ENCODE measurements at regions of chrX and their contacts with region 1.

Region 1: GRCh38 chrX:65706041-65706828 is 38.8 kb downstream of the MSN start:
- DNase-seq: no peak
- H3K4me3 ChIP-seq: no peak overlapping the region
- H3K27ac ChIP-seq: peak overlapping the region; percentile 73 to 82 (median 78)
- H3K4me1 ChIP-seq: peaks cover 0 to 47% (median 39%) of the 10 kb centered on the region in 4 donors
- H3K27me3 ChIP-seq: no peaks in the 10 kb centered on the region
- CTCF ChIP-seq: no peak
- EP300 ChIP-seq: no peak
- POLR2A ChIP-seq: no peak

Region 2: DNA sequence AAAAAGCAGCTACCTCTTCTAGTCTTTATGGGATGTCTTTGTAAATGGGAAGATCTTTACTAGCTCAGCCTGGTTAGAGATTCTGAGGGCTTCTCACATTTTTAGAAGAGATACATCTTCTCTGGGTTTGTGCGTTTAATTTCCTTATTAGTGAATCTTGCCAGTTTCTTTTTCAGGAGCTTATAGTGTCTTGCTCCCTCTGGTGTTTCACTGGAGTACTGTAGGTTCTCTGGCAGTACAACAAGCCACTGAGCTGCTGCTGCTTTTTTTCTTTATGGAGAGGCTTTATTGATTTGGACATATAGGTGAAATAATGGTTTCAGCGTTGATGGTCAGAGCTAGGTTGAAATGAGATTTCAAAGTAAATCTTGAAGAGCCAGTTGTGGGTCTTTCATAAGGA is 254.6 kb before region 1 on chrX:
- intact Hi-C with region 1: no loop called
- DNase-seq: no peak
- H3K4me3 ChIP-seq: no peak overlapping the region
- H3K27ac ChIP-seq: no peak overlapping the region
- H3K4me1 ChIP-seq: no peaks in the 10 kb centered on the region
- H3K27me3 ChIP-seq: no peaks in the 10 kb centered on the region
- CTCF ChIP-seq: no peak
- EP300 ChIP-seq: no peak
- POLR2A ChIP-seq: no peak

Region 3: GRCh38 chrX:65595460-65595876 is 110.8 kb before region 1 on chrX:
- intact Hi-C with region 1: loop called (anchors 2 kb)
- DNase-seq: peak; percentile 97
- H3K4me3 ChIP-seq: no peak overlapping the region
- H3K27ac ChIP-seq: peak overlapping the region; percentile 74 to 78 (median 76)
- H3K4me1 ChIP-seq: peaks cover 0 to 10% (median 4%) of the 10 kb centered on the region in 4 donors
- H3K27me3 ChIP-seq: no peaks in the 10 kb centered on the region
- CTCF ChIP-seq: peak; percentile 89 to 99 (median 97)
- EP300 ChIP-seq: no peak
- POLR2A ChIP-seq: no peak

Region 4: DNA sequence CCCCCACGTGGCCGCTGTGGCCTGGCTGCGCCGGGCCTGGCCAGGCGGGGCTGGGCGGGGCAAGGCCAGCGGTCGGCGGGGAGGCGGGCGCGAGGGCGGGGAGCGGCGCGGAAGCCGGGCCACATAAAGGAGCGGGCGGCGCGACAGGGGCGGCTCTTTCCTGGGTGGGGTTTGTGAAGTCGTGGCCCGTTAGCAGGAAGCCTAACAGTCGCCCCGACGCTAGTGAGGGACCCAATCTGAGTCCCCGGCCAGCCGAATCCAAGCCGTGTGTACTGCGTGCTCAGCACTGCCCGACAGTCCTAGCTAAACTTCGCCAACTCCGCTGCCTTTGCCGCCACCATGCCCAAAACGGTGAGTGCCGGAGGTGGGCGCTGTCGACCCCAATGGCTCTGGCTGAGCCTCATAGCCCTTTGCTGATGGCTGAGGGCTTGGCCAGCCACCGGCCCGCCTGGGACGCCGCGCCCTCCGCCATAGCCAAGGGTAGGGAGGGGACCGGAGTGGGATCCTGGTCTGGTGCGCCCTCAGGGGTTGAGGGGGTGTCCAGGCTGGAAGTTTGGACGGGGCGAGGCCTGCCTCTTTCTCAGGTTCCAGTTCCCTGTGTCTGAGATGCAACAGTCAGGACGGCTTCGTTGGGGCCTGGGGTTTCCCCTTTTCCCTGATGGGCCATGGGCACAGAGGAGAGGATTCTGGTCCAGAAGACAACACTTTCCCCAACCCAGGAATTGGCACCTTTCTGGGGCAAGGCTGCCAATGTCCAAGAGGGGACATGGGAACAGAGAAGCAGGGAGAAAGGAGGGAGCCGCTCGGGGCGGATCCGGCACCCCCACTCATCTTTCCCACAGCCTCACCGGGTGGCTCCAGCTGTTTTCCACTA is 38.5 kb before region 1 on chrX and contains the start of gene MSN:
- intact Hi-C with region 1: loop called (anchors 2 kb)
- DNase-seq: peak; percentile 88
- H3K4me3 ChIP-seq: peak within 1 kb of the TSS; percentile 57 to 77 (median 68)
- H3K27ac ChIP-seq: peak within 1 kb of the TSS; percentile 93 to 96 (median 94)
- H3K4me1 ChIP-seq: peaks cover 0 to 31% (median 19%) of the 10 kb centered on the region in 4 donors
- H3K27me3 ChIP-seq: no peaks in the 10 kb centered on the region
- CTCF ChIP-seq: no peak
- EP300 ChIP-seq: no peak
- POLR2A ChIP-seq: peak; percentile 44 to 50
- total RNA-seq, gene MSN: 136 to 152 (median 144) TPM

Region 5: DNA sequence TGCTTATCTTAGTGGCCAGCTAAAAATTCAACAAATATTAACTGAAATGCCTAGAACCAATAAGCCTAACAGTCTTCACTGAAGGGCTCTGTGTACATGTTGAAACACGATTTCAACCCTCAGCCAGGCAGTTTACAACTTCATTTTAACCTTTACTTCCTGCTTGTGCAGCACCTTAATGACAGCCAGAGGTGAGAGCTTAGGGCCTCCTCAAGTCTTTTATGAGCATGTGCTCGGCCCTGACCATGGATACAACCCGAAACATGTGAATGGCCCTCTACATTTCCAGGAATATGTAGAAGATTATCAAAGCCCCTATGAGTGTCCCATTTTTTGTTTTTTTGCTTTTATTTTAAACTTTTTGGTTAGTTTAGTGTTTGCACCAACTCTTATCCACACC is 49.6 kb after region 1 on chrX:
- intact Hi-C with region 1: no loop called
- DNase-seq: no peak
- H3K4me3 ChIP-seq: no peak overlapping the region
- H3K27ac ChIP-seq: no peak overlapping the region
- H3K4me1 ChIP-seq: no peaks in the 10 kb centered on the region
- H3K27me3 ChIP-seq: no peaks in the 10 kb centered on the region
- CTCF ChIP-seq: no peak
- EP300 ChIP-seq: no peak
- POLR2A ChIP-seq: no peak

Region 6: GRCh38 chrX:66191563-66191962 is 485.3 kb after region 1 on chrX:
- intact Hi-C with region 1: no loop called
- DNase-seq: no peak
- H3K4me3 ChIP-seq: no peak overlapping the region
- H3K27ac ChIP-seq: no peak overlapping the region
- H3K4me1 ChIP-seq: no peaks in the 10 kb centered on the region
- H3K27me3 ChIP-seq: no peaks in the 10 kb centered on the region
- CTCF ChIP-seq: no peak
- EP300 ChIP-seq: no peak
- POLR2A ChIP-seq: no peak